BJ (cell line): ENCODE measurements at regions of chr11 and their contacts with region 1.

Region 1: GRCh38 chr11:35391922-35392813 is 27.2 kb downstream of the SLC1A2 start:
- DNase-seq: no peak
- H3K4me3 ChIP-seq: no peak overlapping the region
- H3K27me3 ChIP-seq: no peaks in the 10 kb centered on the region
- CTCF ChIP-seq: peak; percentile 83

Region 2: DNA sequence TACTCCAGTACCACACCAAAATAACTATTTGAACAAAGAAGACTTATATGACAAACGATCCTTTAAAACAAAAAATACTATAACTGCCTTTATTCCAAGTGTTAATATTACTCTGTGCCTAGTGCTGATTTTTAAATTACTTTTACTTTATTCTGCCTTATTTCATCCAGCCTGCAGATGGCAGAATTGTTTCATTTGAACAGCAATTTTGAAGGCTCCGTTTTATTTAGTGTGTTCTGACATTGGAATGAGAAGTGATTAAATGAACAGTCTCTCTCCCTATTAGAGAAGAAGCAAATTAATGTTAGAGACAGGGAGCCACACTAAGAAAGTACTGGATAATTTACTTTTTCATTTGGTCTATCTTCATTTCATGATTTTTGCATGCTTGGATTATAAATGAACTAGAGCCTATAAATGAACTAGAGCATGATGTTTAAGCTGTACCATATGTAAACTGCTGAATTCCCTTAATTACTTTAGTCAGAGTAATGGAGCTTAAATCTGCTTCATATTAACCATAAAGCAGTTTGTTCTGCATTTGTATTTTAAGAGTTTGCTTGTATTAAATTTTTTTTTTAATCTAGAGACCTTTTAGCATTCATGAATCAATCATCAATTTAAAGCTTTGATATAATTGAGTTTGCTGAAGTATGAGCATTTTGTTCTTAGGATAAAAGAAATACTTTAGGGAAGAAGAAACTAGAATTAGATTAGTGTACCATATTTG is 465.9 kb before region 1 on chr11:
- CTCF ChIA-PET with region 1: interaction called, 57 read pairs
- POLR2A ChIA-PET with region 1: no interaction called
- DNase-seq: no peak
- H3K4me3 ChIP-seq: no peak overlapping the region
- H3K27me3 ChIP-seq: no peaks in the 10 kb centered on the region
- CTCF ChIP-seq: peak; percentile 64

Region 3: GRCh38 chr11:34940026-34940677 is 452.0 kb before region 1 on chr11:
- CTCF ChIA-PET with region 1: interaction called, 10 read pairs
- POLR2A ChIA-PET with region 1: no interaction called
- DNase-seq: no peak
- H3K4me3 ChIP-seq: no peak overlapping the region
- H3K27me3 ChIP-seq: no peaks in the 10 kb centered on the region
- CTCF ChIP-seq: no peak

Region 4: DNA sequence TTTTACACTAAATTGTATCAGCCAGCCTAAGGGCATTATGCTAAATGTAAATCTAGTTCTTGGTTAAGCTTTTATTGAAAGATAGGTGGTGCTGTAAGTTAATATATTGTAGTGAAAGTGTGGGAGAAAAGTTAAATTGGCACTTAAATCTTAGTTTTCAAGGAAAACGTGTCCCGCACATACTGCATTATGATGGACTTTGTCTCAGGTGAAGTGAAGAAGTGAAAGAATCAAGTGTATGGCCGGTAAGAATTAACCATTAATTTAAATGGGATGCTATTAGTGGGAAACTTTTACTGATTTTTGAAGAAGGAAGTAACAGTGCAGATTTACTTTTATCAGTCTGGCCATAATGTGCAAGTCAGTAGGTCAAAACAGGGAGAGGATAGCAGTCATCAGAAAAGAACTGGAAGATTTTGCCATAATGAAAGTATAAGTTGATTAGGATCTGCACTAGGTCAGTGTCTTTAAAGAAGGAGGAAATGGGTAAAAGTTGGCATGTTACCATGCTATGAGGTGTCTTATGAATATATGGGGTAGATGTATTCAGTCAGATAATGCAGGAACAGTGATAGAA is 394.1 kb before region 1 on chr11:
- CTCF ChIA-PET with region 1: interaction called, 16 read pairs
- POLR2A ChIA-PET with region 1: no interaction called
- DNase-seq: no peak
- H3K4me3 ChIP-seq: no peak overlapping the region
- H3K27me3 ChIP-seq: no peaks in the 10 kb centered on the region
- CTCF ChIP-seq: peak; percentile 36

Region 5: DNA sequence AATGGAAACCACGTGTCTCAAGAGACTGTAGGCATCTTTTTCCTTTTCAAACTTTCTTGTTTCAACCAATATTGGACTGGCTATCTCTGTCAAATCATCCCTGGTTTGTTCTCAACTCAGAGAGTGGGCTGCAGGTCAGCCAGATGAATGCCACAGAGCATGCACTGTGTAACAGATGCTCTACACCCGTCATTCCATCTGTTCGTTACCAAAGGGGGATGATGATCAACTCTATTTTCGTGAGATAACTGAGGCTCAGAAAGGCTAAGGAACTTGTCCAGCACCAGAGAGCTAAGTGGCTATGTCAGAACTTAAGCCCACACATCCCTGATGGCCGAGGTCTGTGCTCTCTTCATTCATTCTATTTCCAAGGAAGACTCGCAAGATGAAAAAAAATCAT is 14.9 kb before region 1 on chr11:
- CTCF ChIA-PET with region 1: interaction called, 12 read pairs
- POLR2A ChIA-PET with region 1: no interaction called
- DNase-seq: no peak
- H3K4me3 ChIP-seq: no peak overlapping the region
- H3K27me3 ChIP-seq: no peaks in the 10 kb centered on the region
- CTCF ChIP-seq: no peak